AG04450 (cell line): ENCODE measurements at regions of chr22 and their contacts with region 1.

Region 1: GRCh38 chr22:38317995-38318715 is 922 bp upstream of the CSNK1E start:
- DNase-seq: peak; percentile 52
- H3K4me3 ChIP-seq: peak overlapping the region; percentile 55
- H3K27ac ChIP-seq: peak overlapping the region; percentile 89
- H3K27me3 ChIP-seq: no peaks in the 10 kb centered on the region
- CTCF ChIP-seq: no peak

Region 2: DNA sequence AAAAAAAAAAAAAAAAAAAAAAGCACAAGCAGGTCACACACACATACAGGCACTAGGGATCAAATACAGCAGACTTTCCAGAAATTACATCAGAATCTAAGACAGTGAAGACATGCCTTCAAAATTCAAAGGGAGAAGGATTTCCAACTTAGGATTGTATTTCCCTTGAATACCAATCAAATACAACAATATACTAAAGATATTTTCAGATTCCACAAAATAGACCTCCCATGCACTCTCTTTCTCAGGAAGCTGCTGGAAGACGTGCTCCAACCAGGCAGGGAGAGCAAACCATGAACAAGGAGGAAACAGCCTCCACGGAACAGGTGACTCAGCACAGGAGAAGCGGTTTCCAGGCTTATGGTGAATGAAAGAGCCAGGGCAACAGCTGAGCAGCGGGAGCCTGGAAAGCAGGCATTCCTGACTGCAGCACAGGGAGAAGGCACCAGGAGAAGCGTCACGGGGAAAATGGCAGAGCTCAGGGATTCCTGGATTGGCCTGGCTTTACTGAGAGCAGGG is 77.4 kb before region 1 on chr22:
- CTCF ChIA-PET with region 1: no interaction called
- POLR2A ChIA-PET with region 1: interaction called, 10 read pairs
- DNase-seq: peak; percentile 56
- H3K4me3 ChIP-seq: no peak overlapping the region
- H3K27ac ChIP-seq: peak overlapping the region; percentile 87
- H3K27me3 ChIP-seq: no peaks in the 10 kb centered on the region
- CTCF ChIP-seq: no peak

Region 3: DNA sequence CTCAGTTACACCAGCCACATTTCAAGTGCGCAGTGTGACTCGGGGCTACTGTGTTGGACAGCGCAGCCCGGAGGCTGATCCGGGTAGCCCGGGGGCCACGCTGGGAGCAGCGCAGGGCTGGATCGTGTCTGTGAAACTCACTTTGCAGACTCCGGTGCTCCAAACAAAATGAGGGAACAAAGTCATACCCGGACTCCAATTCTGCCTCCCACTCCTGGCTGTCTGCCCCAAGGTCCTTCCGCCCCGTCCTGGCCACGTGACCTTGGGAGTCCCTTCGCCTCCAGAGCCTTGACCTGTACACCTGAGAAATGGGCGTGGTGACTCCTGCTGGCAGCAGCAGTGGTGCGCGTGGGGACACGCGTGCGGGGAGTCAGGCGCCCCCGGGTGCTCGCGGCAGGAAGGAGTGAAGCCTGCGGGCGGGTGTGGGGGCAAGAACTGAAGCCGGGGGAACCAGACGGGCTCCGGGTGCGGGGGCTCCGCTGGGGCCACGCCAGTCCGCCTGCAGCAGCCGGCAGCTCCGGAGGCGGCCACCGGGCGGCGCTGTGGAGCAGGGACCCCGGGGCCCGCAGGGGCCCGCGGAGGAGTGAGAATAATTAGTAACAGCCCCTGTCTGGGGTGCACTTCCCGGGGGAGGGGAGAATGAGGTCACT is 94.4 kb after region 1 on chr22:
- CTCF ChIA-PET with region 1: no interaction called
- POLR2A ChIA-PET with region 1: no interaction called
- DNase-seq: no peak
- H3K4me3 ChIP-seq: no peak overlapping the region
- H3K27ac ChIP-seq: no peak overlapping the region
- H3K27me3 ChIP-seq: peaks cover 22% of the 10 kb centered on the region
- CTCF ChIP-seq: peak; percentile 55

Region 4: DNA sequence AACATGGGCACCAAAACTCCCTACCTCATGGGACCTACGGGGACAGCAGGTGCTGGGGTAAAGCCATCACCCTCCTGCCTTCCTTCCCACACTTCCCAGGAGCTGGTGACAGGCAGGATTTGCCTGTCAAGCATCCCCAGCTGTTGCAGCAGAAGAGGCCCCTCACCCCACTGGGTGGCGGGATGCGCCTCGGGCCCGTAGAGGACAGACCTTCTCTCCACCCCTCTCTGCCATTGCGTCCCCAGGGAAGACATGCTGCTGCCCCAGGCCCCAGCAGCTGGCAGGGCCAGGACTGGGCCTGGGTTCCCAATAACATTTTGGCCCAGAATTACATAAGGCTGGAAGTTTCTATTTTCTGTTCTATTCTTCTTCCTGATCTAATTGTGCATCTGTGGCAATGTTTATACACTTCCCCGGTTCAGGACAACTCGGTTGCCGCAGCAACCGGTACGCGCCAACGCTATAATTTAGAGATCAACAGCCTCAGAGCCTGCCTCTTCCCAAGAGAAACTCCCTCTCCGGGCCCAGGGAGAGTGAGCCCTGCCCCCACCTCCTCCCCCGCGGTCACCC is 111.4 kb after region 1 on chr22:
- CTCF ChIA-PET with region 1: no interaction called
- POLR2A ChIA-PET with region 1: no interaction called
- DNase-seq: no peak
- H3K4me3 ChIP-seq: no peak overlapping the region
- H3K27ac ChIP-seq: no peak overlapping the region
- H3K27me3 ChIP-seq: peaks cover 16% of the 10 kb centered on the region
- CTCF ChIP-seq: no peak

Region 5: GRCh38 chr22:38481162-38481870 is 163.2 kb after region 1 on chr22:
- CTCF ChIA-PET with region 1: no interaction called
- POLR2A ChIA-PET with region 1: interaction called, 11 read pairs
- DNase-seq: no peak
- H3K4me3 ChIP-seq: no peak overlapping the region
- H3K27ac ChIP-seq: peak overlapping the region; percentile 24
- H3K27me3 ChIP-seq: no peaks in the 10 kb centered on the region
- CTCF ChIP-seq: no peak